Calu3 (cell line): ENCODE measurements at regions of chr5 and their contacts with region 1.

Region 1: GRCh38 chr5:102223542-102224477 is 72.3 kb downstream of the SLCO4C1 start:
- DNase-seq: peak; percentile 39
- H3K4me3 Mint-ChIP-seq: no peak overlapping the region
- H3K27ac Mint-ChIP-seq: no peak overlapping the region
- H3K4me1 Mint-ChIP-seq: no peaks in the 10 kb centered on the region
- H3K27me3 Mint-ChIP-seq: no peaks in the 10 kb centered on the region
- CTCF ChIP-seq: peak; percentile 52

Region 2: GRCh38 chr5:100479079-100479688 is 1744.6 kb before region 1 on chr5:
- CTCF ChIA-PET with region 1: no interaction called
- intact Hi-C with region 1: loop called (anchors 10 kb)
- DNase-seq: peak; percentile 46
- H3K4me3 Mint-ChIP-seq: no peak overlapping the region
- H3K27ac Mint-ChIP-seq: no peak overlapping the region
- H3K4me1 Mint-ChIP-seq: no peaks in the 10 kb centered on the region
- H3K27me3 Mint-ChIP-seq: no peaks in the 10 kb centered on the region
- CTCF ChIP-seq: peak; percentile 65

Region 3: DNA sequence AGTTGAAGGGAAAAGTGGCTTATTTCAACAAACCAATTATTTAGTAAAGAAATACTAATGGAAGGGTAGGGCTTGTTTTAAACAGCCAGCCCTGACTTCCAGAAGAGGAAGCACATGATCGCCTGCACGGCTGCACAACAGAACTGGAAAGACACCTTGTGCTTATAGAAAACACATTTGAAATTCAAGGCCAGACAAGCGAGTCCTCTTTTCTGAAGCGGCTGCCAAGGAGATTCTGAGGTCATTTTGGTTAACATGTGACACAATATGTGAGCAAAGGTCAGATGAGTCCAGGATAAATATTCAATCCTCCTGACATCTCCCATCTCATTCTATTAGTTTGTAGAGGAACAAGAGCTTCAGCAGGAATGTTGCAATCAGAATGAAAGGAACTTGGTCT is 859.3 kb before region 1 on chr5:
- CTCF ChIA-PET with region 1: no interaction called
- intact Hi-C with region 1: loop called (anchors 10 kb)
- DNase-seq: no peak
- H3K4me3 Mint-ChIP-seq: no peak overlapping the region
- H3K27ac Mint-ChIP-seq: no peak overlapping the region
- H3K4me1 Mint-ChIP-seq: no peaks in the 10 kb centered on the region
- H3K27me3 Mint-ChIP-seq: no peaks in the 10 kb centered on the region
- CTCF ChIP-seq: no peak

Region 4: DNA sequence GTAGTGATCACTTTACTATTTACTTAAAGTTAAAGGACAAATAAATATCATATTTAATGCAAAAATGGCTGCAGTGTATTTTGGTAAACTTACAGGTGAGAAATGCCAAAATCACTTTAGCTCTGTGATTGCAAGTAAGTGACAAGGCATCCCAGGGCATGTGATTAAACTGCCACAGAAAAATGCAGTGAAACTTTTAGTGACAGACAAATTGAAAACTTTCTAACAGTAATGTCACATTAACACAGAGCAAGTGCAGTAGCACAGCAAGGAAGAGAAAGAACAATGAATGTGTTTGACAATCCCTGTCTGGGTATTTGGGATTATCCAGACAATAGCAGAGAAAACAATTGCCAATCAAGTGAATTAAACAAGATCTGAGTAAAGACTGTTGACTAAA is 534.5 kb before region 1 on chr5:
- CTCF ChIA-PET with region 1: interaction called, 10 read pairs
- intact Hi-C with region 1: no loop called
- DNase-seq: no peak
- H3K4me3 Mint-ChIP-seq: no peak overlapping the region
- H3K27ac Mint-ChIP-seq: no peak overlapping the region
- H3K4me1 Mint-ChIP-seq: no peaks in the 10 kb centered on the region
- H3K27me3 Mint-ChIP-seq: no peaks in the 10 kb centered on the region
- CTCF ChIP-seq: no peak

Region 5: DNA sequence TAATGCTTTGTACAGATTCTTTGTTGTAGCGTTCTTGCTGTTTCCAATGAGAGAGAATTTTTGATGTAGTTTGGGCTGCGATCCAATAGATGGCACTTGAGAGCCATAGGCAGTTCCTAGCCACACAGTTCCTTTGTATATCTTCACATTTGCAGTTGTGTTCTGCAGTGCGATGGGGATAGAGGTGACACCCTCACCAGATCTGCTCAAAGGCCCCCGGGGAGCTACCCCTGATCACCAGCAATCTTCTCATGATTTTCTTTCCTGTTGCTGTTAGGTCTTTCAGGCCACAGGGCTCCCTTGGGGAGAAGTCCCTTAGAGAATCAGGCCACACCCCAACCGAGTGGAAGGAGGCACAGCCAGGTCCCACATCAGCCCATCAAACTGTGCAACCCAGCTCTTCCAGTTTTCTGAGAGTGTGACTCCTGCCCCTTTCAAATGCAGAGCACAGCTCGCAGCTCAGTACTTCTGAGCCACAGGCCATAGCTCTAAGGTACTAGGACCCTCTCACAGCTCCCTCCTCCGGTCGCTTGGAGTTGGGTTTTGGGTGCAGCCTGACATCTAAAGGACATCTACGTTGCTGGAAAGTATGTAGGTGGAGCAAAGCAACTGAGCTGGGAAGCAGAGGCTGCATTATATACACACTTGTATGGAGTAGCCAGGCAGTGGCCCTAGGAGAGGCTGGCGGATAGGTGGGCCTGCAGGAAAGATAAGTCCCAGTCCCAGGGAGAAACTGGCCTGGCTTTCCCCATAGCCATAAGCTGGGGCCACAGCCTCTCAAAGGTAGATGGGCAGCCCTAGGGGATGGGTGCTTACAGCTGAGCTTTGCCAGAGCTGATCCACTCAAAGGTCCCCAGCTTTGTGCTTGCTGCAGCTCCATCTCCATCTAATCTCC is 281.2 kb before region 1 on chr5:
- CTCF ChIA-PET with region 1: no interaction called
- intact Hi-C with region 1: loop called (anchors 1 kb)
- DNase-seq: peak; percentile 56
- H3K4me3 Mint-ChIP-seq: no peak overlapping the region
- H3K27ac Mint-ChIP-seq: no peak overlapping the region
- H3K4me1 Mint-ChIP-seq: peaks cover 10% of the 10 kb centered on the region
- H3K27me3 Mint-ChIP-seq: no peaks in the 10 kb centered on the region
- CTCF ChIP-seq: peak; percentile 73

Region 6: GRCh38 chr5:102031711-102032110 is 192.1 kb before region 1 on chr5:
- CTCF ChIA-PET with region 1: no interaction called
- intact Hi-C with region 1: no loop called
- DNase-seq: no peak
- H3K4me3 Mint-ChIP-seq: no peak overlapping the region
- H3K27ac Mint-ChIP-seq: no peak overlapping the region
- H3K4me1 Mint-ChIP-seq: no peaks in the 10 kb centered on the region
- H3K27me3 Mint-ChIP-seq: no peaks in the 10 kb centered on the region
- CTCF ChIP-seq: no peak

Region 7: GRCh38 chr5:102090770-102091381 is 132.9 kb before region 1 on chr5:
- CTCF ChIA-PET with region 1: no interaction called
- intact Hi-C with region 1: loop called (anchors 5 kb)
- DNase-seq: peak; percentile 69
- H3K4me3 Mint-ChIP-seq: no peak overlapping the region
- H3K27ac Mint-ChIP-seq: no peak overlapping the region
- H3K4me1 Mint-ChIP-seq: peaks cover under 1% of the 10 kb centered on the region
- H3K27me3 Mint-ChIP-seq: no peaks in the 10 kb centered on the region
- CTCF ChIP-seq: peak; percentile 69

Region 8: DNA sequence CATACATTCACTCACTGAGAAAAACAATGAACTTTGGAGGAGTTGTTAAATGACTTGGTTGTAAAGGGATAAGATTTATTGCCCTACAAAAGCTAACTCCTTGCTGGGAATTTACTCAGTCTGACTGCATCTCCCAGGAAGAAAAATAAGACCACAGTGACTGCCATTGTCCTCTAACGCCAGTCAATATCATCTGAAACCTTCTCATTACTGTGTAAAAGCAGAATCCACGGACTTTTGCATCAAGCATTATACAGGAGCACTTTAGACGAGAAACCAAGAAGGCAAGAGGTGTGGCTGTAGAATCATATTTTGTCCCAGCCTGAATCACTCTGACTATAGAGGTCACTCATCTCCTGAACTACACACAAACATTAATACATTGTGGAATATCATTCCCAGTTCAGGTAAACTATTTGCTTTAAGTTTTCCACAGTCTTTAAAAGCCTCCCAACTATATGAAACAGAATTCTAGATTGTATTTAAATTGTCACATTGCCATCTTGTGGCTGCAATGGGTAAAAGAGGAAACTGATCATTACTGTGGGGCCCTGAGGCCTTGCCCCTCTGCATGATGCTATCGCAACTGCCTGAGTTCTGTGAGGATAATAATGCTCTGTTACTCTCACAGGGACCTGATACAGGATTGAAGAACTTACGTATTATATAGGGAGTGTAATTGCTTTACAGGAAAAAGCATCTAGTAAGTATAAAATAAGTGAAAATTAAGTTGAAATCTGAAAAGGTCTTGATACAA is 70.6 kb before region 1 on chr5:
- CTCF ChIA-PET with region 1: no interaction called
- intact Hi-C with region 1: loop called (anchors 2 kb)
- DNase-seq: peak; percentile 41
- H3K4me3 Mint-ChIP-seq: no peak overlapping the region
- H3K27ac Mint-ChIP-seq: no peak overlapping the region
- H3K4me1 Mint-ChIP-seq: peaks cover 14% of the 10 kb centered on the region
- H3K27me3 Mint-ChIP-seq: no peaks in the 10 kb centered on the region
- CTCF ChIP-seq: peak; percentile 58

Region 9: GRCh38 chr5:103272377-103272776 is 1048.6 kb after region 1 on chr5:
- CTCF ChIA-PET with region 1: no interaction called
- intact Hi-C with region 1: no loop called
- DNase-seq: no peak
- H3K4me3 Mint-ChIP-seq: no peak overlapping the region
- H3K27ac Mint-ChIP-seq: no peak overlapping the region
- H3K4me1 Mint-ChIP-seq: peaks cover 36% of the 10 kb centered on the region
- H3K27me3 Mint-ChIP-seq: no peaks in the 10 kb centered on the region
- CTCF ChIP-seq: no peak

Region 10: DNA sequence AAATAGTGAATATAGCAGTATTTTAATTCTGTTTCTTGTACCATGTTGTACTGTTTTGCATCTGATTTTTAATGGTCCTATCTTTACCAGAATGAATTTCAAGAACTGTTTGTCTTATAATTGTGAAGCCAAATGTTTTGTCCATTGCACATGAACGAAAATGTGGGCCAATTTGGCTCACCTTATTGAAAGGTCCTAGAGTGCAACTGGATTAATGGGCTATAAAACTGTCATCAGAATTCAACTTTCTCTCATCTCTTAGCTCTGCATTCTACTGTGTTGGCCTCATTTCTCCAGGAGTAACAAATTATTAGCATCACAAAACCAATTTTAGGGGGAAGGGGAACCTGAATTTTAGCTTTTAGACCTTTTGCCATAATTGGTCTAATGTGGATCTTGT is 1518.2 kb after region 1 on chr5:
- CTCF ChIA-PET with region 1: no interaction called
- intact Hi-C with region 1: no loop called
- DNase-seq: no peak
- H3K4me3 Mint-ChIP-seq: no peak overlapping the region
- H3K27ac Mint-ChIP-seq: no peak overlapping the region
- H3K4me1 Mint-ChIP-seq: no peaks in the 10 kb centered on the region
- H3K27me3 Mint-ChIP-seq: no peaks in the 10 kb centered on the region
- CTCF ChIP-seq: no peak